ENCODE measurements at regions of chr3 and their contacts with region 1.

Region 1: DNA sequence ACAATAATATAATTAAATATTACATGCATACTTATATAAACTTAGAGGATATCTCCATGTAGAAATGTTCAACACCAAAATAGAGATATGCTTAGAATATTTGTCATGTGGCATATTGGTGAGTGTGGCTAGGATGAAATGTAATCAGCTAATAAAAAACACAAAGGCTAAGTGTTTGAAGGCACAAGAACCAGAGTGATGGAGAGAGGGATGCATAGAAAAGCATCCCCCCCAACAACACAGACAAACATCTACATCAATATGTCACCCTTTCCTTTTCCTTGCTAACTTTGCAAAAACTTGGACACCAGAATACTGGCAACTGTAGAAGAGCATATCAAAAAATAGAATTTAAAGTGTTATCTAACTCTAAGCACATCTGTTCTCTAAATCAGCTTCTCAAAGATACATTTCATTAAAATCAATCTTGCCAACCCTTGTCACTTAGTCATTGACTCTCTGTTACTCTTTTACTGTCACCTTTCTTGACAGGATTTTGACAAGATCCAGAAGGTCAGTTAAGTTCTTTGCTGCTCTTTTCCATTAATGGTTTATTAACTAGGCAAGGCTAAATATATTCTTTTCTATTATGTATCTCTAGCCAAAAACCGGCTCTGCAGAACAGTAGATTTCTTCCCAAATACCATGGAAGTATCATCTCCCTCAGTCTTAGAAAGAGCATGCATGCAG is 695.9 kb downstream of the OTOL1 start:
- DNase-seq: no peak
- H3K4me3 Mint-ChIP-seq: no peak overlapping the region
- H3K27ac Mint-ChIP-seq: no peak overlapping the region
- H3K4me1 Mint-ChIP-seq: no peaks in the 10 kb centered on the region
- H3K27me3 Mint-ChIP-seq: no peaks in the 10 kb centered on the region

Region 2: GRCh38 chr3:161851941-161852566 is 340.4 kb before region 1 on chr3:
- intact Hi-C with region 1: loop called (anchors 5 kb)
- DNase-seq: peak; percentile 14
- H3K4me3 Mint-ChIP-seq: no peak overlapping the region
- H3K27ac Mint-ChIP-seq: no peak overlapping the region
- H3K4me1 Mint-ChIP-seq: no peaks in the 10 kb centered on the region
- H3K27me3 Mint-ChIP-seq: no peaks in the 10 kb centered on the region